HCT116 (cell line): ENCODE measurements at regions of chr15 and their contacts with region 1.

Region 1: DNA sequence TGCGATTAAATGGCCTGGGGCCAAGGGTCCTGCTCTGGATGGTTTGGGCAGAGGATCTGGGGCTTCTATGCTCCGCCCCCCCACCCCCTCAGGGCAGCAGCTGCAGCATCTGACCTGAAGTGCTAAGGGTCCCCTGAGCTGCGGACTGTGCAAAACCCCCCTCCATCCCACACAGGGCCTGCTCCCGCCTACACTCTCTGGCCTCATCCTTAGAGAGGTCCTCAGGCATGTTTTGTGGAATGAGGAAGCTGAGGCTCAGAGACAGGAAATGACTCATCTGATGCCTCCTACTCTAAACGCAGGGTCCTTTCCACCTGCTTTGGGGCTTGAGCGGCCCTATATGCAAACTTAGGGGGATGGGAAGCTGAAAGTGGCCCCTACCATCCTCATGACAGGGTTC is 59.5 kb upstream of the CTSH start:
- DNase-seq: peak; percentile 48
- ATAC-seq: peak; percentile 85
- H3K4me3 ChIP-seq: peak overlapping the region; percentile 24 to 47
- H3K27ac ChIP-seq: peak overlapping the region; percentile 79
- H3K4me1 ChIP-seq: peaks cover 30 to 38% of the 10 kb centered on the region in 2 experiments
- H3K27me3 ChIP-seq: no peaks in the 10 kb centered on the region
- CTCF ChIP-seq: no peak
- POLR2A ChIP-seq: no peak
- RAD21 ChIP-seq: no peak

Region 2: DNA sequence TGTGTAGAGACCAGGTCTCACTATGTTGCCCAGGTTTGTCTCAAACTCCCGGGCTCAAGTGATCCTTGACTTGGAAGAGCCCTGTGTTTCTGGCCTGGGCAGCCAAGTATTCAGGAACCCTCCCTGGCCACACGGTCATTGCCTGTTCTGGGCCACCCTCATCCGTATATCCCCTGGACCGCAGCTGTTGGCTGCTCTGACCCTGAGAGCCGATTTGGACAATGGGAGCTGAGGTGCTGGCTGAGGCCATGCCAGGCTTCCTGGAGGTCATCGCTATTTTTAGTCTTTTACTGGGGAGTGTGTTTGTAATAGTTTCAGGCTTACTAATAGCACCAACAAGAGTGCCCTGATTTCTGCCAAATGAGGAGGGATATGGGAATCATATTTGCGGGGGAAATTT is 253.8 kb before region 1 on chr15:
- CTCF ChIA-PET with region 1: no interaction called
- POLR2A ChIA-PET with region 1: no interaction called
- RAD21 ChIA-PET with region 1: no interaction called
- intact Hi-C with region 1: loop called (anchors 10 kb)
- DNase-seq: no peak
- ATAC-seq: peak; percentile 24
- H3K4me3 ChIP-seq: peak overlapping the region in 1 of 2 experiments; percentile 30; a peak in 1 of 4 replicates
- H3K27ac ChIP-seq: no peak overlapping the region
- H3K4me1 ChIP-seq: peaks cover 0 to 6% of the 10 kb centered on the region in 2 experiments; a peak in 1 of 4 replicates
- H3K27me3 ChIP-seq: no peaks in the 10 kb centered on the region
- CTCF ChIP-seq: no peak
- POLR2A ChIP-seq: no peak
- RAD21 ChIP-seq: no peak

Region 3: GRCh38 chr15:78909791-78910228 is 94.5 kb before region 1 on chr15:
- CTCF ChIA-PET with region 1: interaction called, 22 read pairs
- POLR2A ChIA-PET with region 1: no interaction called
- RAD21 ChIA-PET with region 1: no interaction called
- intact Hi-C with region 1: loop called (anchors 1 kb)
- DNase-seq: peak; percentile 10
- ATAC-seq: peak; percentile 88
- H3K4me3 ChIP-seq: no peak overlapping the region
- H3K27ac ChIP-seq: no peak overlapping the region
- H3K4me1 ChIP-seq: no peaks in the 10 kb centered on the region
- H3K27me3 ChIP-seq: no peaks in the 10 kb centered on the region
- CTCF ChIP-seq: peak; percentile 63 to 82 (median 76); a peak in 5 of 6 replicates
- POLR2A ChIP-seq: no peak
- RAD21 ChIP-seq: peak; percentile 78

Region 4: GRCh38 chr15:79028411-79028964 is 24.2 kb after region 1 on chr15:
- CTCF ChIA-PET with region 1: interaction called, 13 read pairs
- POLR2A ChIA-PET with region 1: no interaction called
- RAD21 ChIA-PET with region 1: no interaction called
- intact Hi-C with region 1: no loop called
- DNase-seq: peak; percentile 52
- ATAC-seq: peak; percentile 86
- H3K4me3 ChIP-seq: no peak overlapping the region
- H3K27ac ChIP-seq: no peak overlapping the region
- H3K4me1 ChIP-seq: no peaks in the 10 kb centered on the region
- H3K27me3 ChIP-seq: no peaks in the 10 kb centered on the region
- CTCF ChIP-seq: peak; percentile 86 to 98 (median 93)
- POLR2A ChIP-seq: no peak
- RAD21 ChIP-seq: peak; percentile 90

Region 5: DNA sequence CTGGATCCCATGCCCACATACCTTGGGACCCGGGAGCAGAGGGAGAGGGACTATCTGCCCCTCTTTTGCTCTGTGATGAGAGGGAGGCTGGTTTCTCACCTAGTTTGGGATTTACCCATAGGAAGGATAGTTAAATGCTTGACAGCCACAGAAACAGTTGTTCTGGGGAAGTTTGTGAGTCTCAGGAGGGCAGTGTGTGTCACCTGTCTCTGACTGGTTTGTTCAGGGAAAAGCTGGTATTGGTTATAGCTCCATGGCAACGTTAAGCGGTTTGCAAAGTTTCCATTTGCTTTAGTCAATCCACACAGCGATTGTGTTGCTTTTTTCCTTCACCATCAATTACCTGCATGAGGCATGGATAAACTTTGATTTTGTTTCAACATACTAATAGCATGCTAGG is 302.9 kb after region 1 on chr15:
- CTCF ChIA-PET with region 1: no interaction called
- POLR2A ChIA-PET with region 1: no interaction called
- RAD21 ChIA-PET with region 1: no interaction called
- intact Hi-C with region 1: no loop called
- DNase-seq: no peak
- ATAC-seq: no peak
- H3K4me3 ChIP-seq: no peak overlapping the region
- H3K27ac ChIP-seq: no peak overlapping the region
- H3K4me1 ChIP-seq: peaks cover 2 to 14% of the 10 kb centered on the region in 2 experiments; a peak in 3 of 4 replicates
- H3K27me3 ChIP-seq: peaks cover 48% of the 10 kb centered on the region
- CTCF ChIP-seq: no peak
- POLR2A ChIP-seq: no peak
- RAD21 ChIP-seq: no peak